ENCODE measurements at regions of chr11 and their contacts with region 1.

Region 1: DNA sequence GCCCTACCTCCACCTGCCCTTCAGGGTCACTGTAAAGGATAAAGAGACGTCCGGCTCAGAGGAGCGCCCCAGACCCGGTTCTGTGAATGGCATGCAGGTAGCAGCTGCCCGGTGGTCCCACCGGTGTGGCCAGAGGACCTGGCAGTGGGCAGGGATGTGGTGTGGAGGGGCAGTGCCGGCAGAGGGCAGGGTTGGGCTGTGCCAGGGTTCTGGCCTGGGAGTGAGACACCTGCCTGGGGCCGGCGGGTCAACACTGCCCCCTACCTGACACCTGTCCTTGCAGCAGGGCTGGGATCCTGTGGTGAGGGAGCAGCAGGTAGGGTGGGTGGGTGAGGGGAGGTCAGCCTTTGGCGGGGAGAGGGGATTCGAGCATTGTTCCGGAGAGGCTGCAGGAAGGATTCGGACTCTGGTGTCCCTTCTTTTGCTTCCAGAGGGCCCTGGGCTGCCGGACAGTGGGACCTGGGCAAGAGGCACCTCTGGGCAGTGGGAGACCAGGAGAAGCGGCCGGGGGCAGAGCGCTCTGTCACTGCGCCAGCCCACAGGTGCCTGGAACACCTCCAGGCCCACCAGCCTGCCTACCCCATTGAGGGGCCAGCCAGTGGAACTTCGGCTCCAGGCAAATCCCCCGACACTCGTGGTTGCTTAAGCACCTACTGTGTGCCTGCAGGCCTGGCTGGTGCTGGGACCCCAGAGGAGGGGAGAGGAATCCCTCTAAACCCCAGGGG is 1.6 kb upstream of the PHLDA2 start:
- DNase-seq: peak; percentile 76
- H3K4me3 ChIP-seq: peak overlapping the region; percentile 59 to 95 (median 70)
- H3K27ac ChIP-seq: peak overlapping the region; percentile 91
- H3K4me1 ChIP-seq: peaks cover 51% of the 10 kb centered on the region
- H3K27me3 ChIP-seq: no peaks in the 10 kb centered on the region
- CTCF ChIP-seq: peak; percentile 77 to 95

Region 2: GRCh38 chr11:2151500-2152257 is 779.2 kb before region 1 on chr11:
- CTCF ChIA-PET with region 1: no interaction called
- dilution Hi-C with region 1: no loop called
- in situ Hi-C with region 1: no loop called
- intact Hi-C with region 1: no loop called
- DNase-seq: peak; percentile 36
- H3K4me3 ChIP-seq: no peak overlapping the region
- H3K27ac ChIP-seq: no peak overlapping the region
- H3K4me1 ChIP-seq: no peaks in the 10 kb centered on the region
- H3K27me3 ChIP-seq: peaks cover 32% of the 10 kb centered on the region
- CTCF ChIP-seq: peak; percentile 81

Region 3: DNA sequence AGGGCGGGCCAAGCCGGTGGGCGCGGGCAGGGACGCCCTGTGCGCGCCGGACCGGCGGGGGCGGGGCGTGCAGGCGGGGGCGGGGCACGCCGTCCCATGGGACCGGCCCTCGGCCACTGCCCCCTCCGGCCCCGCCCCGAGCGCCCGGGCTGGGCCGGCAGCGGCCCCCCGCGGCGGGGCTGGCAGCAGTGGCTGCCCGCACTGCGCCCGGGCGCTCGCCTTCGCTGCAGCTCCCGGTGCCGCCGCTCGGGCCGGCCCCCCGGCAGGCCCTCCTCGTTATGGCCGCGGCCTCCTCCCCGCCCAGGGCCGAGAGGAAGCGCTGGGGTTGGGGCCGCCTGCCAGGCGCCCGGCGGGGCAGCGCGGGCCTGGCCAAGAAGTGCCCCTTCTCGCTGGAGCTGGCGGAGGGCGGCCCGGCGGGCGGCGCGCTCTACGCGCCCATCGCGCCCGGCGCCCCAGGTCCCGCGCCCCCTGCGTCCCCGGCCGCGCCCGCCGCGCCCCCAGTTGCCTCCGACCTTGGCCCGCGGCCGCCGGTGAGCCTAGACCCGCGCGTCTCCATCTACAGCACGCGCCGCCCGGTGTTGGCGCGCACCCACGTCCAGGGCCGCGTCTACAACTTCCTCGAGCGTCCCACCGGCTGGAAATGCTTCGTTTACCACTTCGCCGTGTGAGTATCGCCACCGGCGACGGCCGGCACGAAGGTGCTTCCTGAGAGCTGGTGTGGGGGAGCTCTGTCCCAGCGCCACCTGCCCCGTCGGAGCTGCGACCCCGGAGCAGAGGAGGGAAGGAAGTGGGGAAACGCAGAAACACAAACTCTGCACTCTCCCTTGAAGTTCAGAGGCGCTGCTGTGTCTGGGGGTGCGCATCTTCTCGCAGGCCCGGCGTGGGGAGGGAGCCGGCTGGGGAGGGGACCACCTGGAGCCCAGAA is 485.8 kb before region 1 on chr11 and contains the start of gene KCNQ1:
- CTCF ChIA-PET with region 1: no interaction called
- dilution Hi-C with region 1: no loop called
- in situ Hi-C with region 1: no loop called
- intact Hi-C with region 1: no loop called
- DNase-seq: no peak
- H3K4me3 ChIP-seq: no peak within 1 kb of the TSS
- H3K27ac ChIP-seq: no peak within 1 kb of the TSS
- H3K4me1 ChIP-seq: peaks cover 3% of the 10 kb centered on the region
- H3K27me3 ChIP-seq: peaks cover 16% of the 10 kb centered on the region
- CTCF ChIP-seq: no peak
- total RNA-seq, gene KCNQ1: 0.83 TPM in 1 of 2 donors, not detected in the other

Region 4: DNA sequence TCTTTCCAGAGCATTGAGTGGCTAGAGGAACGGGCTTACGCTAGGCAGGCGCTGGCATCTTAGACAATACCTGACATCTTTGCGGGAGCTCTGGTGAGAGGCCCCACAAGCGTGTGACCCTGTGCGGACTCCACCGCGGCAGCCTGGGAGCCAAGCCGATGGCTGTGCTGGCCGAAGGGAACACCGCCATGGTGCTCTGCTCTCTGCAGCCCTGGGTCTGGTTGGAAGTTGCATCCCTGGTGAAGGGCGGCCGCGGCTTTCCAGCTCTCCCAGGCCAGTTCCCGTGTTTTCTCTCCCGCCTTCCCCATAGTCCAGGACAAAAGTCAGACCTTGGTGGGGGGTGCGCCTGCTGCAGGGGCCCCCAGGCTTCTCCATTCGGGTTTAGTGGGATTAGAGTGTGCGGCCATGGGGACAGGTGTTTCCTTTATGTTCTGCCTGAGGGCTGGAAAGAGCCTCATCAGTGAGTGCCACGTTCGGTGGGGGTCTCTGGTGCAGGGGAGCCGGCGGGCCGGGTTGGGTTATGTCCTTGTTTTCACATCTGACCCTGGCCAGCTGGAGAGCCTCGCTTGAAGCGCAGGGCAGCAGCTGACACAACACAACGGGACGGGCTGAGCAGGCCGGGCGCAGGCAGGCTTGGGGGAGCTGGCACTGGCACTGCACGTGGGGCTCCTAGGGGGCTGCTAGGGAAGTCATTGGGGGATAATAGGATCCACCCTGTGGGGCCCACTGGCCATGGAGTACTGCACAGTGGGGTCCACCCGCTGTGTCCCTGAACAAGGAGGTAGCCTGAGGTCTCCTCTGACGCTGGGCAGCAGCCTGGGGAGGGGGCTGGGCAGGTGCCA is 391.3 kb before region 1 on chr11:
- CTCF ChIA-PET with region 1: no interaction called
- dilution Hi-C with region 1: no loop called
- in situ Hi-C with region 1: no loop called
- intact Hi-C with region 1: no loop called
- DNase-seq: no peak
- H3K4me3 ChIP-seq: no peak overlapping the region
- H3K27ac ChIP-seq: no peak overlapping the region
- H3K4me1 ChIP-seq: no peaks in the 10 kb centered on the region
- H3K27me3 ChIP-seq: no peaks in the 10 kb centered on the region
- CTCF ChIP-seq: no peak

Region 5: GRCh38 chr11:2885676-2886081 is 45.2 kb before region 1 on chr11 and contains the start of gene CDKN1C:
- CTCF ChIA-PET with region 1: no interaction called
- dilution Hi-C with region 1: no loop called
- in situ Hi-C with region 1: no loop called
- intact Hi-C with region 1: loop called (anchors 1 kb)
- DNase-seq: peak; percentile 65
- H3K4me3 ChIP-seq: peak within 1 kb of the TSS; percentile 35 to 63 (median 54)
- H3K27ac ChIP-seq: no peak within 1 kb of the TSS
- H3K4me1 ChIP-seq: peaks cover 17% of the 10 kb centered on the region
- H3K27me3 ChIP-seq: peaks cover 19% of the 10 kb centered on the region
- CTCF ChIP-seq: no peak
- total RNA-seq, gene CDKN1C: 0.38 to 0.50 TPM

Region 6: DNA sequence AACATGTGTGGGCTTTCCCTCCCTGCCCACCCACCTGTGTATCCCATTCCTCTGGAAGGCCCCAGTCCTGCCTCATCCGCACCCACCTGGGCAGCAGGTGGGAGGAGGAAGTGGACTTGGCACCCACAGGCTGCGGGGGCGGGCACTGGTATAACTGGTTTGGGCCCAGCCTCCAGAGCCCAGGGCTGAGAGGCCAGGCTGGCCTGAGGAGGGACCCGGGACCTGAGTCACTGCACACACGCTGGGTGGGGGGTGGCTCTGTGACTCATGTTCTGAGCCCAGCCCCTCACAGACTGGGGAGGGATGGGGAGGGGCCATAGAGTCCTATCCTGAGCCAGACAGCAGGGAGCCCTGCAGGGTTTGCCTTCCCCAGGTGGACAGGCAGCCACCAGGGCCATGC is 18.4 kb before region 1 on chr11:
- CTCF ChIA-PET with region 1: interaction called, 9 read pairs
- dilution Hi-C with region 1: no loop called
- in situ Hi-C with region 1: no loop called
- intact Hi-C with region 1: loop called (anchors 1 kb)
- DNase-seq: peak; percentile 96
- H3K4me3 ChIP-seq: peak overlapping the region in 1 of 3 experiments; percentile 7
- H3K27ac ChIP-seq: no peak overlapping the region
- H3K4me1 ChIP-seq: peaks cover 37% of the 10 kb centered on the region
- H3K27me3 ChIP-seq: no peaks in the 10 kb centered on the region
- CTCF ChIP-seq: no peak

Region 7: DNA sequence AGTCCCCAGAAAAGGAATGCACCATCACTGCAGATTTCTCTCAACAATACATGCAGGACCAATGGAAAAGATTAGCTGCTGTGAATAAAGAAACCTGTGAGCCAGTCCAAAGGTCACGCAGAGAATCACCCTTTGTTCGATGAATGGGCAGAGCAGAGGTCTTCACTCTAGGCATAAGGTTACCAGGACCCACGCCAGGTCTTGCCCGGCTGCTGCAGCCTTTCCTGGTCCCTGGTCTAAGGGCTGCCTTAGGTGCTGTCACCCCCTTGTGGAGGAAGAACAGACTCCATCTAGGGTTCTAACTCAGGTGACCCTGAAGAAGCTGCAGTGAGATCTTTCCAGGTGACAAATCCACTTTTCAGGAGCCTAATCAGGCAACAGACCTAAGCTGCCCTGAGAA is 90.3 kb after region 1 on chr11:
- CTCF ChIA-PET with region 1: no interaction called
- dilution Hi-C with region 1: no loop called
- in situ Hi-C with region 1: no loop called
- intact Hi-C with region 1: loop called (anchors 1 kb)
- DNase-seq: peak; percentile 54
- H3K4me3 ChIP-seq: no peak overlapping the region
- H3K27ac ChIP-seq: no peak overlapping the region
- H3K4me1 ChIP-seq: peaks cover 20% of the 10 kb centered on the region
- H3K27me3 ChIP-seq: no peaks in the 10 kb centered on the region
- CTCF ChIP-seq: peak; percentile 70 to 87

Region 8: GRCh38 chr11:3091791-3092602 is 161.1 kb after region 1 on chr11:
- CTCF ChIA-PET with region 1: no interaction called
- dilution Hi-C with region 1: no loop called
- in situ Hi-C with region 1: no loop called
- intact Hi-C with region 1: loop called (anchors 1 kb)
- DNase-seq: peak; percentile 73
- H3K4me3 ChIP-seq: no peak overlapping the region
- H3K27ac ChIP-seq: no peak overlapping the region
- H3K4me1 ChIP-seq: peaks cover 18% of the 10 kb centered on the region
- H3K27me3 ChIP-seq: no peaks in the 10 kb centered on the region
- CTCF ChIP-seq: peak; percentile 96